ACHN (cell line): ENCODE measurements at regions of chr13 and their contacts with region 1.

Region 1: GRCh38 chr13:76473552-76474134 is 412.6 kb downstream of the KCTD12 start:
- DNase-seq: peak; percentile 74

Region 2: DNA sequence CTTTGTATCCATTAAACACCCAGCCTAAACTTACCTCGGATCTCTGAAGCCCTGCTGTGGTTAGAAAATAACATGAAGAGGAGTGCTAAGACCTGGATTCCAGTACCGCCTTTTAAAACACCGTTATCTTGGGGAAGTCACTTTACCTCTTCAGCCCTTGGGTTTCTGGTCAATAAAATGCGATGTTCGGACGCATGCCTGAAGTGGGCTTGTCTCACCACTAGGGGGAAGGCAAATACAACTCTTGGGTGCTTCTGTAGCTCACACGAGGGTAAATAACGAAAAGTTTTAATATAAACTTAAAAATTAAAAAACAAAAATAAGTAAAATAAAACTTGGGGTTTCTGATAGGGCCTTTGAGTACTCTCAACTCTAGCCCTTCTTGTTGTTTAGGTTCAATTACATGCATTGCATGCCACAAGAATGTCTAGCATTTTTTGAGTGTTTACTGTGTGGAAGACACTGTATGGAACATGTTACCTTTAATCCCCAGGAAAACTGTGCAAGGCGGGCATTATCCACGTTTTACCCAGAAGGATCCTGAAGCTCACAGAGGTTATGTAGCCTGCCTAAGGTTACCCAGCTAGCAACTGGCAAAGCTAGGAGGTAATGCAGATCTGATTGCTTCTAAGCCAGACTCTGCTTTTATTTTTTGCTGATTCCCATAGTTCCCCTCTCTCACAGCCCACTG is 597.1 kb before region 1 on chr13:
- in situ Hi-C with region 1: loop called (anchors 25 kb)
- DNase-seq: peak; percentile 62

Region 3: GRCh38 chr13:76223565-76223964 is 250.1 kb before region 1 on chr13:
- in situ Hi-C with region 1: no loop called
- DNase-seq: no peak

Region 4: GRCh38 chr13:76331943-76332712 is 141.5 kb before region 1 on chr13:
- in situ Hi-C with region 1: no loop called
- DNase-seq: no peak

Region 5: GRCh38 chr13:76663592-76664335 is 190.1 kb after region 1 on chr13:
- in situ Hi-C with region 1: no loop called
- DNase-seq: no peak

Region 6: DNA sequence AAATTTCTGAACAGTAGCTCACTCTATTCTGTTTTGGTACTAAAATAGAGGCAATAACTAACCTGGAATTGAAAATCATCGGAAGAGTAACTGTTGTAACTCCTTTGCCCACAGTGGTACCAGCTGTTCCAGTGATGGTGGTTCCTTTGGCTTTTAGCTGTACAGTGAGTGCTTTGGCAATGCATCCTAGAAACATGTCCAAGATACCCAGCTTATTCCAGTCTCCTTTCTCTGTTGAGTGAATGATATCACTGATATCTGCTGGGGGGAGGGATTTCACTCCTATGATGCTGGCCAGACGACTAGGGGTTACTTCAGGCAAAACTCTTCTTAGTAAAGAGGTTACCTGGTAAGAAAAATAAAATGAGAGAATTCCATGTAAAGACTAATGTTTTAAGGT is 593.9 kb after region 1 on chr13:
- in situ Hi-C with region 1: no loop called
- DNase-seq: no peak